ENCODE measurements at regions of chr17 and their contacts with region 1.

Region 1: GRCh38 chr17:5065227-5065744 is 13.0 kb upstream of the ZFP3 start:
- DNase-seq: no peak
- H3K4me3 ChIP-seq: no peak overlapping the region
- H3K27ac ChIP-seq: no peak overlapping the region
- H3K4me1 ChIP-seq: no peaks in the 10 kb centered on the region
- H3K27me3 ChIP-seq: no peaks in the 10 kb centered on the region
- CTCF ChIP-seq: no peak
- POLR2A ChIP-seq: no peak

Region 2: GRCh38 chr17:4908301-4908700 is 157.0 kb before region 1 on chr17:
- intact Hi-C with region 1: loop called (anchors 2 kb)
- DNase-seq: no peak
- H3K4me3 ChIP-seq: no peak overlapping the region
- H3K27ac ChIP-seq: peak overlapping the region; percentile 51 to 62
- H3K4me1 ChIP-seq: peaks cover 3% of the 10 kb centered on the region
- H3K27me3 ChIP-seq: no peaks in the 10 kb centered on the region
- CTCF ChIP-seq: no peak
- POLR2A ChIP-seq: no peak

Region 3: DNA sequence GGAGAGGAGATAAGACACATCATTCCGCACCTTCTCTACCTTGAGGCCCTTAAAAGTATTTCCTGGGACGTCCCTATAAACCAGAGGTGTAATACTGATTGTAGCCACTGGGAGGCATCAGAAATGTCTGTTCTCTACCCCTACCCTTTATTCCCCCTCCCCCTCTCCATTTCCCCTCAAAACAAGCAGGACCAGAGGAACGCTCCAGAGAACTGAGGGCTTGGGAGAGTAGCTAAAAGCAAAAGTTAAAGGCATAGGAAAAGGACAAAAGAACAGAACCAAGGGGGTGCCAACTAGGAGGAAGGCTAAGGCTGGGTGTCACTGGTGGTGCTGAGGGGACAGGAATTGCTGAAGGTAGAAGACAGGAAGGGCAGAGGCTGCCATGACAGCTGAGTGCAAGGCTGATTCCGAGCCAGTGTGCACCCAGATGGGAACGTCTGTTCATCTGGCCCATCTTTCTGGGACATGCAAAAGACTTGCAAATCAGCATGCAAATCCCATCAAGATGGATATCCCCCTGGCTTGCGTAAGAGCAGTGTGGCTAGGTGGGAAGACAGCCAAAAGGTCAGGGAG is 84.6 kb before region 1 on chr17:
- intact Hi-C with region 1: loop called (anchors 1 kb)
- DNase-seq: peak; percentile 42
- H3K4me3 ChIP-seq: no peak overlapping the region
- H3K27ac ChIP-seq: no peak overlapping the region
- H3K4me1 ChIP-seq: peaks cover under 1% of the 10 kb centered on the region
- H3K27me3 ChIP-seq: no peaks in the 10 kb centered on the region
- CTCF ChIP-seq: peak; percentile 62 to 73 (median 70)
- POLR2A ChIP-seq: no peak

Region 4: GRCh38 chr17:4997302-4998026 is 67.8 kb before region 1 on chr17 and contains the starts of genes INCA1 and KIF1C:
- intact Hi-C with region 1: no loop called
- DNase-seq: peak; percentile 93
- H3K4me3 ChIP-seq: peak within 1 kb of the TSS; percentile 92 to 98
- H3K27ac ChIP-seq: peak within 1 kb of the TSS; percentile 93 to 94
- H3K4me1 ChIP-seq: peaks cover 8% of the 10 kb centered on the region
- H3K27me3 ChIP-seq: no peaks in the 10 kb centered on the region
- CTCF ChIP-seq: peak in 2 of 4 experiments; percentile 51 to 70
- POLR2A ChIP-seq: peak; percentile 89
- total RNA-seq, gene INCA1: 2.5 to 8.4 TPM
- total RNA-seq, gene KIF1C: 59.5 to 88.9 TPM

Region 5: GRCh38 chr17:5254903-5255526 is 189.7 kb after region 1 on chr17:
- intact Hi-C with region 1: no loop called
- DNase-seq: no peak
- H3K4me3 ChIP-seq: no peak overlapping the region
- H3K27ac ChIP-seq: no peak overlapping the region
- H3K4me1 ChIP-seq: peaks cover 5% of the 10 kb centered on the region
- H3K27me3 ChIP-seq: no peaks in the 10 kb centered on the region
- CTCF ChIP-seq: no peak
- POLR2A ChIP-seq: no peak

Measured in prostate gland (tissue), 2 donors.